Gastrocnemius medialis (tissue), 4 donors: ENCODE measurements at regions of chr3 and their contacts with region 1.

Region 1: DNA sequence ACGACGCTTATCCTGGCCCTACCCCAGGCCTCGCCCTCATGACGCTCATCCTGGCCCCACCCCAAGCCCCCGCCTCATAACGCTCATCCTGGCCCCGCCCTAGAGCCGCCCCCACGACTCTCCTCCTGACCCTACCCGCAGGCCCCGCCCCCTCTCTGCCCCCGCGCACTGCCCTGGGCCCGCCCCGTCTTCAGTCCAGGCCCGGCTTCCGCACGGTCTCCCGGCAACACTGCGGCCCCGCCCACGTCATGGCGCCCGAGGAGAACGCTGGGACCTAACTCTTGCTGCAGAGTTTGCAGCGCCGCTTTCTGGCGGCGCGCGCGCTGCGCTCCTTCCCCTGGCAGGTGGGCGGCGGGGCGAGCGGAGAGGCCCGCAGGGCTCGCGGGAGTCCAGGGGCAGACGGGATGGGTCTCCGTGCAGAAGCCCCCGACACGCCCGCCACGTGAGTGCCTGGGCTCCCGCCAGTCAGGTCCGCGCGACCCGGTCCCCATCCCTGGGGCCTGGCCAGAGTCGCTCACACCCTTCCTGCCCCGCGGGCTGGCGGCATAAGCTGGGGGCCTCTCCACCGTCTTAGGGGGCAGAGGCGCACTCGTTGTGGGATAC is 52.5 kb upstream of the ROPN1B start:
- DNase-seq: no peak
- ATAC-seq: peak; percentile 79 to 85
- H3K4me3 ChIP-seq: peak overlapping the region; percentile 71 to 98 (median 84)
- H3K27ac ChIP-seq: peak overlapping the region; percentile 83 to 91 (median 90)
- H3K4me1 ChIP-seq: peaks cover 4 to 8% of the 10 kb centered on the region in 2 donors
- H3K27me3 ChIP-seq: no peaks in the 10 kb centered on the region
- CTCF ChIP-seq: peak in 2 of 5 experiments; percentile 21 to 28
- POLR2A ChIP-seq: no peak

Region 2: GRCh38 chr3:125767641-125768040 is 148.8 kb before region 1 on chr3:
- in situ Hi-C with region 1: no loop called
- intact Hi-C with region 1: loop called (anchors 1 kb)
- DNase-seq: no peak
- ATAC-seq: no peak
- H3K4me3 ChIP-seq: no peak overlapping the region
- H3K27ac ChIP-seq: no peak overlapping the region
- H3K4me1 ChIP-seq: no peaks in the 10 kb centered on the region
- H3K27me3 ChIP-seq: peaks cover 0 to 4% (median 0%) of the 10 kb centered on the region in 3 donors
- CTCF ChIP-seq: no peak
- POLR2A ChIP-seq: no peak

Region 3: DNA sequence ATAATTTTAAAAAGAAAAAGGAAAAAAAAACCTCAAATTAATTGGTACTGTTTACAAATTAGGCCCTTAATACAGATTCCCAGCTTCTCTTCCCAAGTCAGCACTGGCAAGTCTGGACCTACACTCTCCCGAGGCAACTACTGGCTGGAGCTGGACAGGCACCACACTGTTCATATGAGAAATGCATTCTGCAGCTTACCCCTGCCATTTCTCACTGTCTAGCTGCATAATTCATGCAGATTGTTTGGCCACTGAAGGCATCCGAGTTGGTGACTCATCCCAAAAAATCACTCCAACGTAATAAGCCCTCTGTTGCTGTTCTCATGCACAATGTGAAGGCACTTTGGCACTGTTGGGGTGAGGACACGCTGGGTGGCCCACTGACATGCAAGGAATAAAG is 97.8 kb after region 1 on chr3:
- in situ Hi-C with region 1: no loop called
- intact Hi-C with region 1: no loop called
- DNase-seq: no peak
- ATAC-seq: no peak
- H3K4me3 ChIP-seq: no peak overlapping the region
- H3K27ac ChIP-seq: no peak overlapping the region
- H3K4me1 ChIP-seq: no peaks in the 10 kb centered on the region
- H3K27me3 ChIP-seq: no peaks in the 10 kb centered on the region
- CTCF ChIP-seq: no peak
- POLR2A ChIP-seq: no peak